Naive thymus-derived CD8-positive, alpha-beta T cell (primary cell): ENCODE measurements at regions of chr7 and their contacts with region 1.

Region 1: GRCh38 chr7:111029574-111030251 is 61.2 kb upstream of the LRRN3 start:
- DNase-seq: peak in 8 of 10 donors; percentile 12 to 68 (median 46)
- ATAC-seq: peak in 1 of 2 donors; percentile 24
- H3K4me3 Mint-ChIP-seq: peak overlapping the region; percentile 9 to 78 (median 69)
- H3K27ac Mint-ChIP-seq: peak overlapping the region; percentile 86 to 97 (median 92)
- H3K4me1 Mint-ChIP-seq: peaks cover 32 to 62% (median 50%) of the 10 kb centered on the region in 4 donors
- H3K27me3 Mint-ChIP-seq: no peaks in the 10 kb centered on the region

Region 2: DNA sequence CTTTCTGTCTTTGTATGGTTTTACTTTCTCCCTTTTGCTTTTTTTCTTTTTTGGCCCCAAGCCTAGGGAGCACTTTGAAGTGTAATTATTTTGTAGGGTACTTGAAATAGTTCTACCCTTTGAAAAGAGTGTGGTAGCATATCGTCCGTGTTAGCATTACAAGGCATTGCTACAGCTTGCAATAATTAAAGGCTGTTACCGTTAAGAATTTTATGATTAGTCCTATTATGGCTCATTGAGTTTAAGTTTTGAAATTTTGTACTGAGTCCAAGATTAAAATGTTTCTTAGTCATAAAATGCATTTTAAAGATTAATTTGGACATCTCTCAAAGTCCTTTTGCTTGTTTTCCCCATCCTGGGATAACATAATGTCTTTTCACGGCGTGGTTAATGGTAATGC is 428.8 kb before region 1 on chr7:
- POLR2A ChIA-PET with region 1: no interaction called
- DNase-seq: no peak
- ATAC-seq: no peak
- H3K4me3 Mint-ChIP-seq: no peak overlapping the region
- H3K27ac Mint-ChIP-seq: no peak overlapping the region
- H3K4me1 Mint-ChIP-seq: no peaks in the 10 kb centered on the region
- H3K27me3 Mint-ChIP-seq: no peaks in the 10 kb centered on the region

Region 3: GRCh38 chr7:111012799-111013675 is 16.7 kb before region 1 on chr7:
- POLR2A ChIA-PET with region 1: interaction called, 23 read pairs
- DNase-seq: peak in 9 of 10 donors; percentile 19 to 75 (median 42)
- ATAC-seq: peak; percentile 83 to 88
- H3K4me3 Mint-ChIP-seq: peak overlapping the region; percentile 63 to 87 (median 80)
- H3K27ac Mint-ChIP-seq: peak overlapping the region in 9 of 10 donors; percentile 87 to 94 (median 90)
- H3K4me1 Mint-ChIP-seq: peaks cover 32 to 74% (median 70%) of the 10 kb centered on the region in 4 donors
- H3K27me3 Mint-ChIP-seq: no peaks in the 10 kb centered on the region

Region 4: DNA sequence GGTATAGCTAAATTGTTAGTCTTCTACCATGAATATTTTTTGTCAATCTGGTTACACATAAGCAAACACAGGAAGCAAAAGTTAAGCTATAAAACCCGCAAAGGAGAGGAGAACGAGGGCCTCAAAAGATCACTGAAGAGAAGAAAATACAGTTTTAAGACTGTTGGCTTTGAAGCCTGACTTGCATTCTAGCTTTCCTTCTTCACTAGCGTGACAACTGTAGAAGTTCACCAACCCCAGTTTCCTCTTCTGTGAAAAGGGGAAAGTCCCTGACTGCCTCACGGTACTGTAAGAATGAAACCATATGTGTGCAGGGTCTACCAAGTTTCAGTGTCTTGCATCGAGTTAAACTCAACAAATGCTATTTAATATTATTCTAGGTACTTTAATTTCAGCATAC is 53.7 kb after region 1 on chr7:
- POLR2A ChIA-PET with region 1: interaction called, 15 read pairs
- DNase-seq: peak in 9 of 10 donors; percentile 42 to 89 (median 69)
- ATAC-seq: peak; percentile 94 to 98
- H3K4me3 Mint-ChIP-seq: peak overlapping the region; percentile 54 to 84 (median 66)
- H3K27ac Mint-ChIP-seq: peak overlapping the region; percentile 80 to 97 (median 87)
- H3K4me1 Mint-ChIP-seq: peaks cover 23 to 73% (median 64%) of the 10 kb centered on the region in 4 donors
- H3K27me3 Mint-ChIP-seq: no peaks in the 10 kb centered on the region

Region 5: DNA sequence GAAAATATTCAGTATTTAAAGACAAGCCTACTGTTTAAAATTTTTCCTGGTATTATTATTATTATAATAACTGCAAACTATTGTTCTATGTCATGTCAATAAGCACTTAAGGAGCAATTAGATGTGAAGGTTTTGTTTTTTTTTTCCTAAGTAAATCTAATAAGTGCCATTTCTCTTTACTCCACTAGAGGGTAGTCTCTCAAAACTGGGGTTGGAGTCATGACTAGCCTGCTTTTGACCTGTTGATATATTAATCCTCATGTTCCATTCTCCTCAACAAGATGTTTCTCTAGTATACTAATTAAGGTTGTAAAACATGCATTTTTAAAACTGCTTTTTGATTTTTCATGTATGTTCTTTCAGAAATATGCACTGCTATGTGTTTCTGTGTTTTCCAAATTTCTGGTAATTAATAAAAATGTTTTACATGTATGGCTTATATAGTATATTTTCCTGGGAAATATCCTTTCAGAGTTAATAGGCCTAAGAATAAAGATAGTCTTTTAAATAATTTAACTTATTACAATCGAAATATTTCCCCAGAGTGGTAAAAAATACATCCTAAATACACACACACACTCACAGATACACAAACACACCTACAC is 60.2 kb after region 1 on chr7:
- POLR2A ChIA-PET with region 1: interaction called, 10 read pairs
- DNase-seq: peak in 3 of 10 donors; percentile 44 to 59 (median 51)
- ATAC-seq: peak; percentile 14 to 39
- H3K4me3 Mint-ChIP-seq: peak overlapping the region; percentile 86 to 100 (median 98)
- H3K27ac Mint-ChIP-seq: peak overlapping the region in 7 of 10 donors; percentile 66 to 96 (median 92)
- H3K4me1 Mint-ChIP-seq: peaks cover 15 to 45% (median 42%) of the 10 kb centered on the region in 4 donors
- H3K27me3 Mint-ChIP-seq: no peaks in the 10 kb centered on the region